H1 (cell line): ENCODE measurements at regions of chr19 and their contacts with region 1.

Region 1: GRCh38 chr19:41934849-41935374 is 6.7 kb upstream of the ERFL start:
- DNase-seq: peak; percentile 62 to 97
- H3K4me3 ChIP-seq: no peak overlapping the region
- H3K27ac ChIP-seq: no peak overlapping the region
- H3K4me1 ChIP-seq: peaks cover 0 to 13% (median 8%) of the 10 kb centered on the region in 4 experiments; a peak in 6 of 7 replicates
- H3K27me3 ChIP-seq: peaks cover 37 to 82% (median 75%) of the 10 kb centered on the region in 4 experiments
- CTCF ChIP-seq: peak; percentile 90 to 96 (median 93)
- EP300 ChIP-seq: peak in 1 of 2 experiments; percentile 28; a peak in 1 of 3 replicates
- POLR2A ChIP-seq: no peak
- RAD21 ChIP-seq: peak; percentile 85 to 87

Region 2: DNA sequence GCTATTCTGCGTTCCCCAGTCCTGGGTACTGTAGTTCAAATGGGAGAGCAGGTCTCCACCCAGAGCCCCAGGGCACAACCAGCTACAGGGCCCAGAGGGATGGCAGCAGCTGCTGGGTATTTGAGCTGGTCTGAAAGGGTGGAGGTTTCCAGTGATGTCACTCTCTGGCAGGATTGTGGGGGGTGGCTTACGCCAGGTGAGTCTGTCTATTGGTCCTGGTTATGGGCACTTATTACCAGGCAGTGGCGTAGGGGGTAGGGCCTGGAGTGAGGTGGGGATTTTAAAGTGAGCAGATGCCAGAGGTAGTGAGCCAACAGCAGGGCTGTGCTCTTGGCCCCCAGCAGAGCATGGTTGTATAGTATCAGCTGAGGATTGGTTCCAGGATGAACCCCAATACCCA is 68.6 kb before region 1 on chr19:
- CTCF ChIA-PET with region 1: interaction called, 4 read pairs
- POLR2A ChIA-PET with region 1: interaction called, 71 read pairs
- DNase-seq: no peak
- H3K4me3 ChIP-seq: no peak overlapping the region
- H3K27ac ChIP-seq: peak overlapping the region; percentile 29; the same call in 1 of the 2 replicates
- H3K4me1 ChIP-seq: peaks cover 3 to 22% (median 11%) of the 10 kb centered on the region in 4 experiments
- H3K27me3 ChIP-seq: no peaks in the 10 kb centered on the region
- CTCF ChIP-seq: no peak
- EP300 ChIP-seq: no peak
- POLR2A ChIP-seq: peak in 1 of 2 experiments; percentile 64
- RAD21 ChIP-seq: no peak

Region 3: GRCh38 chr19:41883821-41884733 is 50.8 kb before region 1 on chr19:
- CTCF ChIA-PET with region 1: interaction called, 11 read pairs
- POLR2A ChIA-PET with region 1: interaction called, 7 read pairs
- DNase-seq: peak; percentile 90 to 95
- H3K4me3 ChIP-seq: peak overlapping the region; percentile 81 to 97 (median 91)
- H3K27ac ChIP-seq: no peak overlapping the region
- H3K4me1 ChIP-seq: peaks cover 3 to 21% (median 12%) of the 10 kb centered on the region in 4 experiments
- H3K27me3 ChIP-seq: peaks cover 1 to 18% (median 17%) of the 10 kb centered on the region in 4 experiments; a peak in 6 of 7 replicates
- CTCF ChIP-seq: no peak; a peak in 1 of 4 replicates
- EP300 ChIP-seq: peak in 1 of 2 experiments; percentile 85; a peak in 1 of 3 replicates
- POLR2A ChIP-seq: peak in 1 of 2 experiments; percentile 76; a peak in 2 of 3 replicates
- RAD21 ChIP-seq: peak in 1 of 2 experiments; percentile 12; a peak in 1 of 4 replicates

Region 4: GRCh38 chr19:41945135-41945766 is 10.3 kb after region 1 on chr19:
- CTCF ChIA-PET with region 1: interaction called, 51 read pairs
- POLR2A ChIA-PET with region 1: interaction called, 5 read pairs
- DNase-seq: no peak
- H3K4me3 ChIP-seq: no peak overlapping the region
- H3K27ac ChIP-seq: no peak overlapping the region
- H3K4me1 ChIP-seq: no peaks in the 10 kb centered on the region; a peak in 1 of 7 replicates
- H3K27me3 ChIP-seq: peaks cover 9 to 16% (median 15%) of the 10 kb centered on the region in 4 experiments; a peak in 6 of 7 replicates
- CTCF ChIP-seq: no peak
- EP300 ChIP-seq: no peak
- POLR2A ChIP-seq: no peak
- RAD21 ChIP-seq: no peak

Region 5: GRCh38 chr19:41959056-41960053 is 24.4 kb after region 1 on chr19 and contains the start of gene RABAC1:
- CTCF ChIA-PET with region 1: interaction called, 15 read pairs
- POLR2A ChIA-PET with region 1: interaction called, 8 read pairs
- DNase-seq: peak; percentile 79 to 94
- H3K4me3 ChIP-seq: peak within 1 kb of the TSS; percentile 81 to 92 (median 86)
- H3K27ac ChIP-seq: peak within 1 kb of the TSS; percentile 77; the same call in 1 of the 2 replicates
- H3K4me1 ChIP-seq: peaks cover 3 to 10% (median 6%) of the 10 kb centered on the region in 4 experiments
- H3K27me3 ChIP-seq: no peaks in the 10 kb centered on the region
- CTCF ChIP-seq: peak in 2 of 3 experiments; percentile 25 to 36; a peak in 3 of 4 replicates
- EP300 ChIP-seq: no peak
- POLR2A ChIP-seq: peak in 1 of 2 experiments; percentile 75; a peak in 1 of 3 replicates
- RAD21 ChIP-seq: no peak
- total RNA-seq, gene RABAC1: 123 and 124 TPM in 2 replicates